CD4-positive, alpha-beta T cell (primary cell): ENCODE measurements at regions of chr11 and their contacts with region 1.

Region 1: DNA sequence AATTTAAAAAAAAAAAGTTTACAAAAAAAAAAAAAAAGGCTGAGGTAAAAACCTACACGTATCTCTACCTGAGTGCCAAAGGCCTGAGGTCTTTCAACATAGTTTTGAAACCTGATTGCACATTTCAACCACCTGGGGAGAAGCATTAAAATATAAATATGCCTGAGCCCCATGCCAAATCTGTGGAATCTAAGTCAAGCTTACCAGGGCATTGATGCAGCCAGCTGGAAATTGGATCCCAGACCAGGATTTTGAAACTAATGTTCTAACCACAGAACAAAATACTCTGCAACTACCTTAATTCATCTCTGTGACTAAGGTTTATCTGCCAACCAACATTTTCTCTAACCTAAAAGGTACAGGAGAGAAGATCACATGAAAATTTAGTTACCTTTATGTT is 38.8 kb upstream of the CHRNA10 start:
- DNase-seq: no peak
- ATAC-seq: no peak
- H3K4me3 ChIP-seq: no peak overlapping the region
- H3K4me3 Mint-ChIP-seq: no peak overlapping the region
- H3K27ac ChIP-seq: no peak overlapping the region
- H3K27ac Mint-ChIP-seq: no peak overlapping the region
- H3K4me1 ChIP-seq: no peaks in the 10 kb centered on the region
- H3K4me1 Mint-ChIP-seq: no peaks in the 10 kb centered on the region
- H3K27me3 ChIP-seq: no peaks in the 10 kb centered on the region
- H3K27me3 Mint-ChIP-seq: no peaks in the 10 kb centered on the region
- CTCF ChIP-seq: no peak

Region 2: DNA sequence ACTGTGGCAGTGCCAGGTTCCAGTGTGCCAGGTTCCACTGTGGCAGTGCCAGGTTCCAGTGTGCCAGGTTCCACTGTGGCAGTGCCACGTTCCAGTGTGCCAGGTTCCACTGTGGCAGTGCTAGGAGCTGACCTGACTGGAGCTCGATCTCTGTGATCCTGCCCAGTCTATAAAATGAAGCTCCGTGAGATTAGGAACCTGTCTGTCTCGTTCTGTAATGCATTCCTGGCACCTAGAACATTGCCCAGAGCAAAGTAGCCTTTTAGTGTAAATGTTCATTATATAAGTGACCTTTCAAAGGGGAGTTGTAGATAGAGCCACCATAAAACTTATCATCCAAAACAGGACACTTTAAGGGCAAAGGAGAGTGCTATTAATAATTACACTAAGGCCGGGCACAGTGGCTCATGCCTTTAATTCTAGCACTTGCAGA is 104.2 kb before region 1 on chr11:
- CTCF ChIA-PET with region 1: no interaction called
- POLR2A ChIA-PET with region 1: no interaction called
- intact Hi-C with region 1: no loop called
- DNase-seq: no peak
- ATAC-seq: no peak
- H3K4me3 ChIP-seq: no peak overlapping the region
- H3K4me3 Mint-ChIP-seq: no peak overlapping the region
- H3K27ac ChIP-seq: no peak overlapping the region
- H3K27ac Mint-ChIP-seq: no peak overlapping the region
- H3K4me1 ChIP-seq: no peaks in the 10 kb centered on the region
- H3K4me1 Mint-ChIP-seq: no peaks in the 10 kb centered on the region
- H3K27me3 ChIP-seq: no peaks in the 10 kb centered on the region
- H3K27me3 Mint-ChIP-seq: no peaks in the 10 kb centered on the region
- CTCF ChIP-seq: no peak

Region 3: GRCh38 chr11:3767536-3767935 is 57.6 kb after region 1 on chr11:
- CTCF ChIA-PET with region 1: no interaction called
- POLR2A ChIA-PET with region 1: no interaction called
- intact Hi-C with region 1: loop called in 1 of 2 experiments (anchors 5 kb)
- DNase-seq: no peak
- ATAC-seq: no peak
- H3K4me3 ChIP-seq: no peak overlapping the region
- H3K4me3 Mint-ChIP-seq: no peak overlapping the region
- H3K27ac ChIP-seq: no peak overlapping the region
- H3K27ac Mint-ChIP-seq: no peak overlapping the region
- H3K4me1 ChIP-seq: no peaks in the 10 kb centered on the region
- H3K4me1 Mint-ChIP-seq: no peaks in the 10 kb centered on the region
- H3K27me3 ChIP-seq: no peaks in the 10 kb centered on the region
- H3K27me3 Mint-ChIP-seq: no peaks in the 10 kb centered on the region
- CTCF ChIP-seq: no peak